IMR-90 (cell line): ENCODE measurements at regions of chr9 and their contacts with region 1.

Region 1: DNA sequence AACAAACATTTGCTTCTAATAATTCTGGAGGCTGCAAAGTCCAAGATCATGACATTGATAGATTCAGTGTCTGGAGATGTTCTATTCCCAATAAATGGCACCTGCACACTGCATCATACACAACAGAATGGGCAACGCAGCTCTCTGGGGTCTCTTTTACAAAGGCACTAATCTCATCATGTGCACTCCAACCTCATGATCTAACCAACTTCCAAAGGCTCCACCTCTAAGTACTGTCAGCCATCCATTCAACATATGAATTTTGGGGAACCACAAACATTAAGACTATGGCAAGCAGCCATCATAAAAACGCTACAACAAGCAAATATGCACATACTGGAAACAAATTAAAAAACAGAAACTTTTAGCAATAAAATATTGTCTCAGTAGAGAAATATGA is 121.1 kb downstream of the CYLC2 start:
- DNase-seq: no peak
- ATAC-seq: no peak
- H3K4me3 ChIP-seq: no peak overlapping the region
- H3K27ac ChIP-seq: no peak overlapping the region
- H3K4me1 ChIP-seq: no peaks in the 10 kb centered on the region
- H3K27me3 ChIP-seq: no peaks in the 10 kb centered on the region
- CTCF ChIP-seq: no peak
- POLR2A ChIP-seq: no peak
- RAD21 ChIP-seq: no peak

Region 2: GRCh38 chr9:103037508-103038477 is 78.5 kb before region 1 on chr9:
- CTCF ChIA-PET with region 1: no interaction called
- POLR2A ChIA-PET with region 1: no interaction called
- dilution Hi-C with region 1: no loop called
- in situ Hi-C with region 1: no loop called
- intact Hi-C with region 1: no loop called
- DNase-seq: no peak
- ATAC-seq: no peak
- H3K4me3 ChIP-seq: no peak overlapping the region
- H3K27ac ChIP-seq: no peak overlapping the region
- H3K4me1 ChIP-seq: no peaks in the 10 kb centered on the region
- H3K27me3 ChIP-seq: no peaks in the 10 kb centered on the region
- CTCF ChIP-seq: no peak
- POLR2A ChIP-seq: no peak
- RAD21 ChIP-seq: no peak

Region 3: DNA sequence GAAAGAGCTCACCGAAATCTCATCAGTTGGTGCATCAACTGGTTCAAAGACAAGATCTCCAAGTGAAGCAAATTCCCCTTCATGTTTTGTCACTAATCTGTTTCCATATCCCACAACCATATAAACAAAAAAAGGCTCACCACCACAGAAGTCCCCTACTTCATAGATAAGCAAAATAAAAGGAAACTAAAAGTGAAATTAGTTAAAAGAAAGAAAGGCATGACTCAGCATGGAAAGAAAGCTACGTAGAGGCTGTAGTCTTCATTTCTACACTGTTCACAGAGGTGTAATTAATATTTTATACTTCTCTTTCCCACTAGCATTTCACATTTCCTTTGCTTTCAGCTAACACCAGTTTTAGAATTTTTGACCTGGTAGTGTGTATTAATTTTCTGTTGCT is 86.9 kb after region 1 on chr9:
- CTCF ChIA-PET with region 1: no interaction called
- POLR2A ChIA-PET with region 1: no interaction called
- dilution Hi-C with region 1: no loop called
- in situ Hi-C with region 1: loop called (anchors 25 kb)
- intact Hi-C with region 1: no loop called
- DNase-seq: no peak
- ATAC-seq: no peak
- H3K4me3 ChIP-seq: no peak overlapping the region
- H3K27ac ChIP-seq: no peak overlapping the region
- H3K4me1 ChIP-seq: no peaks in the 10 kb centered on the region
- H3K27me3 ChIP-seq: no peaks in the 10 kb centered on the region
- CTCF ChIP-seq: no peak
- POLR2A ChIP-seq: no peak
- RAD21 ChIP-seq: no peak